Activated naive CD4-positive, alpha-beta T cell treated with anti-CD3 and anti-CD28 coated beads for 36 hours (primary cell): ENCODE measurements at regions of chr1 and their contacts with region 1.

Region 1: GRCh38 chr1:116737020-116737854 is 17.0 kb upstream of the CD2 start:
- DNase-seq: peak; percentile 84
- H3K4me3 Mint-ChIP-seq: peak overlapping the region; percentile 71
- H3K27ac Mint-ChIP-seq: peak overlapping the region; percentile 100
- H3K4me1 Mint-ChIP-seq: peaks cover 61% of the 10 kb centered on the region
- H3K27me3 Mint-ChIP-seq: no peaks in the 10 kb centered on the region

Region 2: GRCh38 chr1:116377541-116378529 is 359.4 kb before region 1 on chr1:
- CTCF ChIA-PET with region 1: no interaction called
- intact Hi-C with region 1: loop called (anchors 1 kb)
- DNase-seq: peak; percentile 47
- H3K4me3 Mint-ChIP-seq: peak overlapping the region; percentile 72
- H3K27ac Mint-ChIP-seq: peak overlapping the region; percentile 95
- H3K4me1 Mint-ChIP-seq: peaks cover 64% of the 10 kb centered on the region
- H3K27me3 Mint-ChIP-seq: no peaks in the 10 kb centered on the region

Region 3: GRCh38 chr1:116754198-116754977 is 17.2 kb after region 1 on chr1 and contains the start of gene CD2:
- CTCF ChIA-PET with region 1: interaction called, 44 read pairs
- intact Hi-C with region 1: loop called (anchors 1 kb)
- DNase-seq: peak; percentile 81
- H3K4me3 Mint-ChIP-seq: peak within 1 kb of the TSS; percentile 100
- H3K27ac Mint-ChIP-seq: peak within 1 kb of the TSS; percentile 100
- H3K4me1 Mint-ChIP-seq: peaks cover 28% of the 10 kb centered on the region
- H3K27me3 Mint-ChIP-seq: no peaks in the 10 kb centered on the region
- total RNA-seq, gene CD2: 251 to 264 TPM

Region 4: GRCh38 chr1:116806245-116806644 is 69.0 kb after region 1 on chr1:
- CTCF ChIA-PET with region 1: interaction called, 6 read pairs
- intact Hi-C with region 1: loop called (anchors 1 kb)
- DNase-seq: peak; percentile 91
- H3K4me3 Mint-ChIP-seq: peak overlapping the region; percentile 86
- H3K27ac Mint-ChIP-seq: peak overlapping the region; percentile 97
- H3K4me1 Mint-ChIP-seq: peaks cover 90% of the 10 kb centered on the region
- H3K27me3 Mint-ChIP-seq: no peaks in the 10 kb centered on the region

Region 5: GRCh38 chr1:116847688-116848531 is 110.7 kb after region 1 on chr1:
- CTCF ChIA-PET with region 1: no interaction called
- intact Hi-C with region 1: loop called (anchors 1 kb)
- DNase-seq: peak; percentile 62
- H3K4me3 Mint-ChIP-seq: no peak overlapping the region
- H3K27ac Mint-ChIP-seq: peak overlapping the region; percentile 51
- H3K4me1 Mint-ChIP-seq: peaks cover 37% of the 10 kb centered on the region
- H3K27me3 Mint-ChIP-seq: no peaks in the 10 kb centered on the region

Region 6: GRCh38 chr1:116934586-116935207 is 197.5 kb after region 1 on chr1:
- CTCF ChIA-PET with region 1: interaction called, 5 read pairs
- intact Hi-C with region 1: loop called (anchors 1 kb)
- DNase-seq: no peak
- H3K4me3 Mint-ChIP-seq: no peak overlapping the region
- H3K27ac Mint-ChIP-seq: no peak overlapping the region
- H3K4me1 Mint-ChIP-seq: peaks cover 18% of the 10 kb centered on the region
- H3K27me3 Mint-ChIP-seq: no peaks in the 10 kb centered on the region

Region 7: DNA sequence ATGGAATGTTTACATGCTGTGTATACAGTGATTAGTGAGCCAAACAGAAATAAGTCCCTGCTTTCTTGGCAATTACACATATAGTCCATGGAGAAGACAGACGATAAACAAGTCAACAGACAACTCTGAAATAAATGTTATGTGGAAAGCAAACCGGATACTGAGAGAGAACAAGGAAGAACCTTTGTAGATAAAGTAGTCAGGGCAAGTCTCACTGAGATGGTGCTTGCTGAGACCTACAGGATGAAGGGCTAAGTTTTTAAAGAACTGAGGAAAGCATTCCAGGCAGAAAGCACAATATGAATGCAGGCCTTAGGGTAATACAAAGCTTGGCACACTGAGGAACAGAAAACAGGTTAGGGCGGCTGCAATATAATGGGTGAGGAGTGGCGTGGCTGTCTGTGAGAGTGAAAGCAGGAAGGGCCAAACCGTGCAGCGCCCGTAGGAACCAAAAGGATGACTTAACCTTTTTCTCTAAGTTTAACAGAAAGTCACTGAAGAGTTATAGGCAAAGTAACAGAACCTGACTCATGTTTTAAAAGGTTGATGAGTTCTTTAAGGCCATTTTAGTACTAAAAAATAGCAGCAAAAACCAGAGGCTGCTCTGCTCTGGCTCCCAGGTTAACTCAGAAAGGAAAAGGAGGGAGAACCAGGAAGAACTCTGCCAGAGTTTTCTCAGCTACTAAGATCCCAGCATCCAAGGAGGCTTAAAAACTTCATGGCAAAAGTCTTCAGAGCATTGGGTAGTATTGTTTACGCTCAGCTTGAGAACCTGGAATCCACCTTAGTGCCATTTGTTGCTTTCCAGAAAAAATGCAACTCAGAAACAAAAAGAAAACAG is 314.2 kb after region 1 on chr1:
- CTCF ChIA-PET with region 1: interaction called, 4 read pairs
- intact Hi-C with region 1: loop called (anchors 1 kb)
- DNase-seq: peak; percentile 69
- H3K4me3 Mint-ChIP-seq: peak overlapping the region; percentile 45
- H3K27ac Mint-ChIP-seq: peak overlapping the region; percentile 28
- H3K4me1 Mint-ChIP-seq: peaks cover 61% of the 10 kb centered on the region
- H3K27me3 Mint-ChIP-seq: no peaks in the 10 kb centered on the region